ENCODE measurements at regions of chr7 and their contacts with region 1.

Region 1: GRCh38 chr7:151876899-151877777 is at the start of gene PRKAG2:
- DNase-seq: peak; percentile 70 to 84 (median 77)
- H3K4me3 ChIP-seq: peak within 1 kb of the TSS; percentile 89 to 90
- H3K4me3 Mint-ChIP-seq: peak within 1 kb of the TSS; percentile 95 to 100 (median 96)
- H3K27ac ChIP-seq: peak within 1 kb of the TSS; percentile 72
- H3K27ac Mint-ChIP-seq: peak within 1 kb of the TSS; percentile 86 to 97 (median 95)
- H3K4me1 ChIP-seq: peaks cover 20% of the 10 kb centered on the region
- H3K4me1 Mint-ChIP-seq: peaks cover 6 to 33% (median 19%) of the 10 kb centered on the region in 4 donors
- H3K27me3 ChIP-seq: no peaks in the 10 kb centered on the region
- H3K27me3 Mint-ChIP-seq: no peaks in the 10 kb centered on the region
- total RNA-seq, gene PRKAG2: 60.4 to 61.0 TPM

Region 2: DNA sequence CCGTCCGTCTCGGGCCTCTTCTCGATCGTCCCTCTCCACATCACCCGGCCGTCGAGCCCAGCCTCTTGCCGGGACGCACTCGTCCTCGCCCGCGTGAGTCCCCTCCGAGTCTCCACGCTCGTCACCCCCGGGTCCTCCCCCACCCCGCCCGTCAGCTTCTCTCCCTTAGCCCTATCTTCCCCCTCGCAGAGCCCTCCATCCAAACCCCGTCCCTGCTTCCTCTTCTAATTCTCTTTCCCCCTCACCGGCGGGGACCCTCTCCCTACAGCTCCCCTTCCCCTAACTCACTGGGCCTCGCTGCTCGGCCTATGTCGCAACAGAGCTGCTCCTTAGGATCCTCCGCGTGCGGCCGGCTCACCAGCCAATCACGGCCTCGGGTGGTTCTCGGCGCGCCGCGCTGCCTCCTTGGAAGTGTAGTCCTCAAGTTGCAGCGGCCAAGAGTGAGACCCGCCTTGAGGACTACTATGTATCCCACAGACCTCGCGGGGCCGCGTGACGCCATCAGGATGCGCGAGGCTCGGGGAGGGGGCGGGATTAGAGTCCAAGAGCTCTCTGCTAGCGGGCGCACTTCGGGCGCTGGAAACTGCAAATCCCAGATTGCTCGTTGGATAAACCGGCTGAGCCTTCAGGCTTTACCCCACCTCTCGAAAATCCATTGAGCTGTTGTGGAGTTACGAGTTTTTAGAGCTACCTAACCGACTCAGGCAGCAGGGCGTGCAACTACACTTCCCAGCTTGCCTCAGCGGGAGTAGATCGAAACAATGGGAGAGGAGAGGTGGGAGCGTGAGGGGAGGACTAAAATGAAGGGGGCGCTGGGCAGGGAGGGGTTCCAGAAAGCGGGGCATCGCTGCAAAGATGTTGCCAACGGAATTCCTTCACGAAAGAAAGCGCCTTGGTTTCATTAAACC is 650.0 kb before region 1 on chr7 and contains the start of gene ABCF2:
- CTCF ChIA-PET with region 1: no interaction called
- POLR2A ChIA-PET with region 1: no interaction called
- intact Hi-C with region 1: loop called (anchors 2 kb)
- DNase-seq: peak; percentile 94 to 99 (median 95)
- H3K4me3 ChIP-seq: peak within 1 kb of the TSS; percentile 62 to 80
- H3K4me3 Mint-ChIP-seq: peak within 1 kb of the TSS; percentile 95 to 100 (median 96)
- H3K27ac ChIP-seq: peak within 1 kb of the TSS; percentile 83
- H3K27ac Mint-ChIP-seq: peak within 1 kb of the TSS; percentile 95 to 98 (median 96)
- H3K4me1 ChIP-seq: peaks cover 34% of the 10 kb centered on the region
- H3K4me1 Mint-ChIP-seq: peaks cover 29 to 52% (median 40%) of the 10 kb centered on the region in 4 donors
- H3K27me3 ChIP-seq: no peaks in the 10 kb centered on the region
- H3K27me3 Mint-ChIP-seq: no peaks in the 10 kb centered on the region
- total RNA-seq, gene ABCF2: 31.4 to 35.7 TPM

Region 3: GRCh38 chr7:151519765-151520418 is 357.2 kb before region 1 on chr7 and contains the start of gene RHEB:
- CTCF ChIA-PET with region 1: no interaction called
- POLR2A ChIA-PET with region 1: interaction called, 9 read pairs
- intact Hi-C with region 1: loop called (anchors 2 kb)
- DNase-seq: peak; percentile 98
- H3K4me3 ChIP-seq: peak within 1 kb of the TSS; percentile 58 to 82
- H3K4me3 Mint-ChIP-seq: peak within 1 kb of the TSS; percentile 92 to 100 (median 95)
- H3K27ac ChIP-seq: peak within 1 kb of the TSS; percentile 80
- H3K27ac Mint-ChIP-seq: peak within 1 kb of the TSS; percentile 97 to 100 (median 99)
- H3K4me1 ChIP-seq: peaks cover 44% of the 10 kb centered on the region
- H3K4me1 Mint-ChIP-seq: peaks cover 28 to 46% (median 38%) of the 10 kb centered on the region in 4 donors
- H3K27me3 ChIP-seq: no peaks in the 10 kb centered on the region
- H3K27me3 Mint-ChIP-seq: peaks cover 0 to 1% of the 10 kb centered on the region in 2 donors
- total RNA-seq, gene RHEB: 40.8 to 45.1 TPM

Region 4: GRCh38 chr7:151755823-151756731 is 121.1 kb before region 1 on chr7:
- CTCF ChIA-PET with region 1: no interaction called
- POLR2A ChIA-PET with region 1: no interaction called
- intact Hi-C with region 1: no loop called
- DNase-seq: peak; percentile 43 to 75 (median 54)
- H3K4me3 ChIP-seq: peak overlapping the region in 1 of 2 donors; percentile 28
- H3K4me3 Mint-ChIP-seq: peak overlapping the region; percentile 60 to 83 (median 74)
- H3K27ac ChIP-seq: peak overlapping the region; percentile 34
- H3K27ac Mint-ChIP-seq: peak overlapping the region; percentile 55 to 96 (median 92)
- H3K4me1 ChIP-seq: peaks cover 19% of the 10 kb centered on the region
- H3K4me1 Mint-ChIP-seq: peaks cover 9 to 36% (median 25%) of the 10 kb centered on the region in 4 donors
- H3K27me3 ChIP-seq: no peaks in the 10 kb centered on the region
- H3K27me3 Mint-ChIP-seq: no peaks in the 10 kb centered on the region

Region 5: DNA sequence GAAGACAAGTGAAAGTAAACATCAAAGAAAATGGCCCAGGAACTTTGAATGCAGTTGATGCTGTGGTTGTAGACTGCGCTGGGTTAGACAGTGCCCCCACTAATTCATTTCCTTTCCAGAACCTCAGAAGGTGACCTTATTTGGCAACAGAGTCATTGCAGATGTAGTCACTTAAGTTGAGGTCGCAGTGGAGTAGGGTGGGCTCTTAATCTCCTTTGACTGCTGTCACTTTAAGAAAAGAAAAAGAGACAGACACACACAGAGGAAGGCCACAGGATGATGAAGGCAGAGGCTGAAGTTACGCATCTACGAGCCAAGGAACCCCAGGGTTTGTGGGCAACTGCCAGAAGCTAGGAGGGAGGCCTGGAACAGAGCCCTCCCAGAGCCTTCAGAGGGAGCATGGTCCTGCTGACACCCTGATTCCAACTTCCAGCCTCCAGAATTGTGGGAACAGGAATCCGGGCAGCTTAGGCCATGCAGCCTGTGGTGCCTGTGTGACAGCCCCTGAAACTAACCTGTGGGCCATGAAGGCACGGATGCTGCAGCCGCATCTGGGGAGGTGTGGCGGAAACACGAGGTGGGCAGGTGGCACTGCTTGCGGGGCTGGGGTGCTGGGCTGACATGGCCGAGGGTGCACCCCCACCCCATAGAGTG is 107.8 kb before region 1 on chr7:
- CTCF ChIA-PET with region 1: no interaction called
- POLR2A ChIA-PET with region 1: interaction called, 8 read pairs
- intact Hi-C with region 1: loop called (anchors 5 kb)
- DNase-seq: peak; percentile 65 to 69 (median 67)
- H3K4me3 ChIP-seq: peak overlapping the region in 1 of 2 donors; percentile 23
- H3K4me3 Mint-ChIP-seq: peak overlapping the region; percentile 67 to 84 (median 80)
- H3K27ac ChIP-seq: peak overlapping the region; percentile 30
- H3K27ac Mint-ChIP-seq: peak overlapping the region; percentile 82 to 98 (median 92)
- H3K4me1 ChIP-seq: peaks cover 36% of the 10 kb centered on the region
- H3K4me1 Mint-ChIP-seq: peaks cover 34 to 64% (median 45%) of the 10 kb centered on the region in 4 donors
- H3K27me3 ChIP-seq: no peaks in the 10 kb centered on the region
- H3K27me3 Mint-ChIP-seq: no peaks in the 10 kb centered on the region

Region 6: GRCh38 chr7:151838861-151839391 is 38.2 kb before region 1 on chr7:
- CTCF ChIA-PET with region 1: interaction called, 5 read pairs
- POLR2A ChIA-PET with region 1: interaction called, 4 read pairs
- intact Hi-C with region 1: loop called (anchors 5 kb)
- DNase-seq: peak in 4 of 5 donors; percentile 25 to 48 (median 36)
- H3K4me3 ChIP-seq: peak overlapping the region in 1 of 2 donors; percentile 12
- H3K4me3 Mint-ChIP-seq: peak overlapping the region; percentile 63 to 90 (median 75)
- H3K27ac ChIP-seq: peak overlapping the region; percentile 38
- H3K27ac Mint-ChIP-seq: peak overlapping the region; percentile 58 to 90 (median 82)
- H3K4me1 ChIP-seq: peaks cover 37% of the 10 kb centered on the region
- H3K4me1 Mint-ChIP-seq: peaks cover 21 to 54% (median 37%) of the 10 kb centered on the region in 4 donors
- H3K27me3 ChIP-seq: no peaks in the 10 kb centered on the region
- H3K27me3 Mint-ChIP-seq: no peaks in the 10 kb centered on the region

Region 7: GRCh38 chr7:152025077-152025936 is 148.2 kb after region 1 on chr7 and contains the start of gene GALNT11:
- CTCF ChIA-PET with region 1: interaction called, 4 read pairs
- POLR2A ChIA-PET with region 1: interaction called, 7 read pairs
- intact Hi-C with region 1: loop called (anchors 5 kb)
- DNase-seq: peak; percentile 80 to 93 (median 91)
- H3K4me3 ChIP-seq: peak within 1 kb of the TSS; percentile 76 to 85
- H3K4me3 Mint-ChIP-seq: peak within 1 kb of the TSS; percentile 86 to 95 (median 90)
- H3K27ac ChIP-seq: peak within 1 kb of the TSS; percentile 79
- H3K27ac Mint-ChIP-seq: peak within 1 kb of the TSS; percentile 92 to 99 (median 96)
- H3K4me1 ChIP-seq: peaks cover 26% of the 10 kb centered on the region
- H3K4me1 Mint-ChIP-seq: peaks cover 20 to 45% (median 34%) of the 10 kb centered on the region in 4 donors
- H3K27me3 ChIP-seq: no peaks in the 10 kb centered on the region
- H3K27me3 Mint-ChIP-seq: no peaks in the 10 kb centered on the region
- total RNA-seq, gene GALNT11: 19.1 to 23.6 TPM

Region 8: DNA sequence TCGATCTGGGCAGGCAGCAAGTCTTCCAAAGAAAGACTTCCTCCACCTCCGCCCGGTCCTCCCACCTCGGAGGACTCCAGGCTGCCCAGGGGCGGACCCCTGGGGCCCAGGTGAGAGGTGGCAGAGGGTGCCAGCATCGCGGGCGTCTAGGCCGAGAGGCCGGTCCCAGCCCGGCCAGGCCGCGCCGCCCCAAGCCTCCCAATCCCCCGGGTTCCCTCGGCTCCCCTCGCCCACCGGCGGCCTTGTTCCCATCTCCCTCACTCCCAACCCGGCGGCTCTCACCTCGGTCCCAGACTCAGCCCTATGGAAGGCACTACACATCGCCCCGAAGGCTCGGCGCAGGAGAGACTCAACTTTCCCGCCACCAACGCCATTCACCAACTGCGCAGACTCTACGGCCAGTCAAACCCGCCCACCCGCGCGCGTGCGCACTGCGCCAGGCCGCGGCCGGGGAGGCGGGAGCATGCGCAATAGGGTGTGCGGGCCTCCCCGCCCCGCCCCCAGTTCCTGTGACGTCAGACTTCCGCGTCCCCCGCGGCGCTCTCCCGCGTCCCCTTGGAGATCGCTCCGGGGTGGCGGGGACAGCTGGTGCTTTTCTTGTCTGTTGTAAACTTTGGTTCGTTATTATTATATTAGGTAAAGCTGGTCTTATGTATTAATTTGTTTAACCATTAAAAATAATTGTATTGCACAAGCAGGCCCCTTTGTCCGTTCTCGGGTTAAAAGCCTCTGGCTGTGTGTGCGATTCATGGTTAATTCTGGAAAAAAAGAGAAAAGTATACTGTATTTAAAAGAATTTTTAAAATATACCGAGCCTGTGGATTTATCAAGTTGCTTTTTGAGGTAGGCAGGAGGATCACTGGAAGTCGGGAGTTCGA is 798.9 kb after region 1 on chr7 and contains the start of gene XRCC2:
- CTCF ChIA-PET with region 1: no interaction called
- POLR2A ChIA-PET with region 1: no interaction called
- intact Hi-C with region 1: loop called (anchors 5 kb)
- DNase-seq: peak; percentile 87 to 99 (median 96)
- H3K4me3 ChIP-seq: peak within 1 kb of the TSS; percentile 52 to 62
- H3K4me3 Mint-ChIP-seq: peak within 1 kb of the TSS; percentile 89 to 96 (median 95)
- H3K27ac ChIP-seq: peak within 1 kb of the TSS; percentile 73
- H3K27ac Mint-ChIP-seq: peak within 1 kb of the TSS; percentile 69 to 98 (median 94)
- H3K4me1 ChIP-seq: peaks cover 14% of the 10 kb centered on the region
- H3K4me1 Mint-ChIP-seq: peaks cover 4 to 17% (median 11%) of the 10 kb centered on the region in 4 donors
- H3K27me3 ChIP-seq: no peaks in the 10 kb centered on the region
- H3K27me3 Mint-ChIP-seq: no peaks in the 10 kb centered on the region
- total RNA-seq, gene XRCC2: 0.75 to 1.1 TPM

Measured in CD4-positive, alpha-beta memory T cell (primary cell).